Cardiac septum (tissue), 1 donor: ENCODE measurements at regions of chr13 and their contacts with region 1.

Region 1: GRCh38 chr13:72727417-72728289 is at the starts of genes BORA and MZT1:
- DNase-seq: peak; percentile 98
- total RNA-seq, gene BORA: 0.54 TPM
- total RNA-seq, gene MZT1: 7.4 TPM

Region 2: DNA sequence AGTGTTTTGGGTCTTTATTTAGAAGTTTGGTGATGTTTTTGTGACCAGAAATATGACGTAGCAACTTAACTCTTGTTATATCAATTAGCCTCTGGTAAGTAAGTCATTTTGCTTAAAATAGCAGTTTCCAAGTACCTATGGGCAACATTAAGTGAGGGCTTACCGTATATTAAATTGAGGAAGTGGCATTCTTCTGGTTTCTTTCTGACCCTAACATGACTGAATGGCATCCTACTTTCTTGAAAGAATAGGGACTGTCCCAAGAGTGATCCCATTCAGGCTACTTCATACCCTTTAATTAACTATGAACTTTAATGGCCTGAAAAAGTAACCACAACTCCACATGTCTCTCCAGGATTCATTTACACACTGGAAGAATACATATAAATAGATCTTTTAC is 106.8 kb before region 1 on chr13:
- intact Hi-C with region 1: no loop called
- DNase-seq: no peak

Region 3: GRCh38 chr13:72781451-72782439 is 54.1 kb after region 1 on chr13 and contains the starts of genes DIS3 and PIBF1:
- intact Hi-C with region 1: loop called (anchors 5 kb)
- DNase-seq: peak; percentile 98
- total RNA-seq, gene DIS3: 18.1 TPM
- total RNA-seq, gene PIBF1: 14.2 TPM